ENCODE measurements at regions of chr1 and their contacts with region 1.

Region 1: GRCh38 chr1:85259118-85259911 is at the start of gene C1orf52:
- DNase-seq: peak; percentile 92 to 99 (median 96)
- ATAC-seq: peak; percentile 99
- H3K4me3 ChIP-seq: peak within 1 kb of the TSS; percentile 83
- H3K4me3 Mint-ChIP-seq: peak within 1 kb of the TSS; percentile 93 to 99 (median 98)
- H3K27ac ChIP-seq: peak within 1 kb of the TSS; percentile 90
- H3K27ac Mint-ChIP-seq: peak within 1 kb of the TSS; percentile 91 to 98 (median 96)
- H3K4me1 ChIP-seq: peaks cover 14 to 16% of the 10 kb centered on the region in 2 donors
- H3K4me1 Mint-ChIP-seq: peaks cover 19 to 52% (median 45%) of the 10 kb centered on the region in 7 donors
- H3K27me3 ChIP-seq: no peaks in the 10 kb centered on the region
- H3K27me3 Mint-ChIP-seq: no peaks in the 10 kb centered on the region
- total RNA-seq, gene C1orf52: 25.7 to 55.4 (median 46.1) TPM

Region 2: DNA sequence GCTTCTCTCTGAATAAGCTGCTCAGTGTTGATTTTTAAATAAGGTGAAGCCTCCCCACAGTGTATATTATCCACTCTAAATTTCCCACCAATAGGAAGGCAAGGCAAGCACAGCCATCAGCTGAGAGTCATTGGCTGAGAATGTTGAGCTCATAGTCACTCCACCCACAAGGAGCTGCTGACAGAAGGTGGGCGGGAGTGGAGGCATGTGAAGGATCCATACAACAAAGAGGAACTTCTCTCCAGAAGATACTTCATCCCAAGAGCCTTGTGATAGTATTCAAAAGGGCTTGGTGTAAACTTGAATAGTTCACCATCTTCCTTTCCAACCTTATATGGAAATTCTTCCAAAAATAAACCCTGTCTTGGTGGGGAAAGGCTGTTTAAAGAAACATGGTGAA is 915.0 kb before region 1 on chr1:
- CTCF ChIA-PET with region 1: no interaction called
- POLR2A ChIA-PET with region 1: no interaction called
- intact Hi-C with region 1: no loop called
- DNase-seq: no peak
- ATAC-seq: no peak
- H3K4me3 ChIP-seq: no peak overlapping the region
- H3K4me3 Mint-ChIP-seq: no peak overlapping the region
- H3K27ac ChIP-seq: no peak overlapping the region
- H3K27ac Mint-ChIP-seq: no peak overlapping the region
- H3K4me1 ChIP-seq: no peaks in the 10 kb centered on the region
- H3K4me1 Mint-ChIP-seq: no peaks in the 10 kb centered on the region
- H3K27me3 ChIP-seq: no peaks in the 10 kb centered on the region
- H3K27me3 Mint-ChIP-seq: peaks cover 0 to 5% (median 4%) of the 10 kb centered on the region in 5 donors

Region 3: GRCh38 chr1:84506002-84506728 is 753.1 kb before region 1 on chr1 and contains the starts of genes GNG5 and SPATA1:
- CTCF ChIA-PET with region 1: no interaction called
- POLR2A ChIA-PET with region 1: no interaction called
- intact Hi-C with region 1: loop called in 1 of 2 experiments (anchors 2 kb)
- DNase-seq: peak; percentile 94 to 98 (median 96)
- ATAC-seq: peak; percentile 95
- H3K4me3 ChIP-seq: peak within 1 kb of the TSS; percentile 94
- H3K4me3 Mint-ChIP-seq: peak within 1 kb of the TSS; percentile 94 to 100 (median 98)
- H3K27ac ChIP-seq: peak within 1 kb of the TSS; percentile 76
- H3K27ac Mint-ChIP-seq: peak within 1 kb of the TSS; percentile 93 to 99 (median 96)
- H3K4me1 ChIP-seq: peaks cover 15 to 27% of the 10 kb centered on the region in 2 donors
- H3K4me1 Mint-ChIP-seq: peaks cover 18 to 54% (median 50%) of the 10 kb centered on the region in 7 donors
- H3K27me3 ChIP-seq: no peaks in the 10 kb centered on the region
- H3K27me3 Mint-ChIP-seq: peaks cover 0 to 2% (median 0%) of the 10 kb centered on the region in 5 donors
- total RNA-seq, gene GNG5: 24.8 to 90.7 (median 28.9) TPM
- total RNA-seq, gene SPATA1: 1.7 to 3.6 (median 2.2) TPM in 4 of 5 experiments, not detected in the other

Region 4: DNA sequence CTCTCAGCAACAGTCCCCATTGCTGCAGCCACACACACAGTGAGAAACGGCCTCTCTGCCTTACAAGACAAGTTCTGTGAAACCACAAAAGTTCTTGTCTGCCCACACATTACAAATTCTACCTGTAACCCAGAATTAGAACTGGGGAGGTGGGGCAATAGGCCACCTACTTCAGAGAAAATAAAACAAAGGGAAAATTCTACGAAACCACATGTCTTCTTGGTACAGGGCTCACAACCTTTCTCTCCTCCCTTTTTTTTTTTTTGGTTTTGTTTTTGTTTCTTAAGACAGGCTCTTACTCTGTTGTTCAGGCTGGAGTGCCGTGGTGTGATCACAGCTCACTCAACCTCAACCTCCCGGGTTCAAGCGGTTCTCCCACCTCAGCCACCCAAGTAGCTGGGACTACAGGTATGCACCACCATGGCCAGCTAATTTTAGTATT is 396.5 kb before region 1 on chr1:
- CTCF ChIA-PET with region 1: no interaction called
- POLR2A ChIA-PET with region 1: no interaction called
- intact Hi-C with region 1: loop called in 1 of 2 experiments (anchors 5 kb)
- DNase-seq: peak in 8 of 9 donors; percentile 42 to 81 (median 66)
- ATAC-seq: peak; percentile 87
- H3K4me3 ChIP-seq: peak overlapping the region; percentile 44
- H3K4me3 Mint-ChIP-seq: peak overlapping the region; percentile 71 to 89 (median 83)
- H3K27ac ChIP-seq: peak overlapping the region; percentile 67
- H3K27ac Mint-ChIP-seq: peak overlapping the region; percentile 83 to 95 (median 92)
- H3K4me1 ChIP-seq: peaks cover 30 to 46% of the 10 kb centered on the region in 2 donors
- H3K4me1 Mint-ChIP-seq: peaks cover 31 to 69% (median 59%) of the 10 kb centered on the region in 7 donors
- H3K27me3 ChIP-seq: no peaks in the 10 kb centered on the region
- H3K27me3 Mint-ChIP-seq: peaks cover 0 to 6% (median 0%) of the 10 kb centered on the region in 5 donors

Region 5: GRCh38 chr1:85027242-85027983 is 231.9 kb before region 1 on chr1:
- CTCF ChIA-PET with region 1: interaction called, 7 read pairs
- POLR2A ChIA-PET with region 1: interaction called, 5 read pairs
- intact Hi-C with region 1: loop called (anchors 1 to 2 kb)
- DNase-seq: peak in 7 of 9 donors; percentile 12 to 56 (median 34)
- ATAC-seq: peak; percentile 94
- H3K4me3 ChIP-seq: peak overlapping the region; percentile 33
- H3K4me3 Mint-ChIP-seq: peak overlapping the region in 9 of 10 donors; percentile 19 to 70 (median 49)
- H3K27ac ChIP-seq: peak overlapping the region; percentile 5
- H3K27ac Mint-ChIP-seq: peak overlapping the region; percentile 43 to 91 (median 84)
- H3K4me1 ChIP-seq: peaks cover 0 to 7% of the 10 kb centered on the region in 2 donors
- H3K4me1 Mint-ChIP-seq: peaks cover 7 to 13% (median 10%) of the 10 kb centered on the region in 7 donors
- H3K27me3 ChIP-seq: no peaks in the 10 kb centered on the region
- H3K27me3 Mint-ChIP-seq: no peaks in the 10 kb centered on the region

Region 6: DNA sequence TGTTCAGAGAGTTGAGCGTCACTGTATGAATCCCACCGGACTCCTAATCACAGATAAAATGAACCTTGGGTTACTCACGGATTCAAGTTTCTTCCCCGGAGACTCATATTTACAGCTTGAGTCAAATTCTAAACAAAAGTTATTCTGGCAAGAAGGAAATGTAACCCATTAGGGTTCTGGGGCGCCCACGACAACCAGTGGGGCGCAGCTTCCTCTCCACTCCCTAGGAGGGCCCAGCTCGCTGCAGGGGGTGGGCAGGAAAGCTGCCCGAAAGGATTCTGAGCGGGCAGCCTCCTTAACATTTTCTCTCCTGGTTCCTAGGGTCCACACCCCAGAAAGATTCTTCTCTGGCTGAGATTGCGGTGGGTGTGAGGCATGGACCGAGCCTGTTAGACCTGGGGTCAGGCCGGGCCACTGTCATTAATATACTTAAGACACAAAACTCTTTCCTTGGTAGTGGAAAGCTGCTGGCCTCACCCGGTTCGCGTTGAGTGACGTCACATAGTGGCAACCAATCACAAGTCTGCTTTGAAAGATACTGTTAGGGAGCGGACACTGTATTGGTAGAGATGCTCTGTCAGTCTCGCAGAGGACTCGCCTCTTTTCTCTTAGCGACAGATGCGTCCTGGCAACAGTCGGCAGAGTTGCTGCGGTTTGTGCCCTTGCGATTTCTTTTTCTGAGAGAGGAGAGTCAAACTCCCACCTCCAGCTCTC is 197.4 kb before region 1 on chr1:
- CTCF ChIA-PET with region 1: no interaction called
- POLR2A ChIA-PET with region 1: no interaction called
- intact Hi-C with region 1: loop called (anchors 1 to 2 kb)
- DNase-seq: peak; percentile 49 to 93 (median 86)
- ATAC-seq: peak; percentile 99
- H3K4me3 ChIP-seq: peak overlapping the region; percentile 57
- H3K4me3 Mint-ChIP-seq: peak overlapping the region; percentile 79 to 93 (median 88)
- H3K27ac ChIP-seq: peak overlapping the region; percentile 24
- H3K27ac Mint-ChIP-seq: peak overlapping the region; percentile 57 to 96 (median 92)
- H3K4me1 ChIP-seq: peaks cover 4 to 6% of the 10 kb centered on the region in 2 donors
- H3K4me1 Mint-ChIP-seq: peaks cover 11 to 21% (median 14%) of the 10 kb centered on the region in 7 donors
- H3K27me3 ChIP-seq: no peaks in the 10 kb centered on the region
- H3K27me3 Mint-ChIP-seq: peaks cover 3 to 39% (median 13%) of the 10 kb centered on the region in 5 donors

Region 7: DNA sequence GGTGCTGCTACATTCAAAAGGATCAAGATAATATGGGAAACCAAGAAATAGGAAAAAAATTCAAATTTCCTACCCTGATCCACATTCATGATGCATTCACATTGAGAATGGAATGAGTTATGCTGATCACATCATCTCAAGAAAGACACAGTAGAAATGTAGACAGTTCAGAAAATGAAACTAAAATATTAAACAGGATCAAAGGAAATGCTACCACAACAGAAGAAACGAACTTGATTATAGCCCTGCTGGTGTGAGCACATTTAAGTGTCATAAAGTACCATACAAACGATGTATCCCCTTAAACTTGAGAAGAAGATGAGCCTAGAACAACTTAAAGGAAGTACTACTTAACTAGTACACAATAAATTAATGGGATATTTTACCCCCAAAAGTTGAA is 79.8 kb before region 1 on chr1:
- CTCF ChIA-PET with region 1: no interaction called
- POLR2A ChIA-PET with region 1: no interaction called
- intact Hi-C with region 1: loop called in 1 of 2 experiments (anchors 1 kb)
- DNase-seq: peak in 7 of 9 donors; percentile 34 to 67 (median 61)
- ATAC-seq: peak; percentile 85
- H3K4me3 ChIP-seq: peak overlapping the region; percentile 7
- H3K4me3 Mint-ChIP-seq: peak overlapping the region; percentile 8 to 86 (median 70)
- H3K27ac ChIP-seq: peak overlapping the region; percentile 25
- H3K27ac Mint-ChIP-seq: peak overlapping the region; percentile 6 to 93 (median 55)
- H3K4me1 ChIP-seq: peaks cover 6 to 10% of the 10 kb centered on the region in 2 donors
- H3K4me1 Mint-ChIP-seq: peaks cover 10 to 24% (median 17%) of the 10 kb centered on the region in 7 donors
- H3K27me3 ChIP-seq: no peaks in the 10 kb centered on the region
- H3K27me3 Mint-ChIP-seq: no peaks in the 10 kb centered on the region

Region 8: GRCh38 chr1:85707990-85708828 is 448.9 kb after region 1 on chr1 and contains the start of gene ZNHIT6:
- CTCF ChIA-PET with region 1: no interaction called
- POLR2A ChIA-PET with region 1: no interaction called
- intact Hi-C with region 1: loop called (anchors 1 to 5 kb)
- DNase-seq: peak; percentile 62 to 94 (median 89)
- ATAC-seq: peak; percentile 99
- H3K4me3 ChIP-seq: peak within 1 kb of the TSS; percentile 90
- H3K4me3 Mint-ChIP-seq: no peak within 1 kb of the TSS
- H3K27ac ChIP-seq: peak within 1 kb of the TSS; percentile 77
- H3K27ac Mint-ChIP-seq: no peak within 1 kb of the TSS
- H3K4me1 ChIP-seq: peaks cover 14 to 21% of the 10 kb centered on the region in 2 donors
- H3K4me1 Mint-ChIP-seq: peaks cover 11 to 33% (median 18%) of the 10 kb centered on the region in 7 donors
- H3K27me3 ChIP-seq: no peaks in the 10 kb centered on the region
- H3K27me3 Mint-ChIP-seq: no peaks in the 10 kb centered on the region
- total RNA-seq, gene ZNHIT6: 13.8 to 22.2 (median 20.2) TPM

Measured in naive thymus-derived CD4-positive, alpha-beta T cell (primary cell).